Aorta (tissue), 5 donors: ENCODE measurements at regions of chr1 and their contacts with region 1.

Region 1: DNA sequence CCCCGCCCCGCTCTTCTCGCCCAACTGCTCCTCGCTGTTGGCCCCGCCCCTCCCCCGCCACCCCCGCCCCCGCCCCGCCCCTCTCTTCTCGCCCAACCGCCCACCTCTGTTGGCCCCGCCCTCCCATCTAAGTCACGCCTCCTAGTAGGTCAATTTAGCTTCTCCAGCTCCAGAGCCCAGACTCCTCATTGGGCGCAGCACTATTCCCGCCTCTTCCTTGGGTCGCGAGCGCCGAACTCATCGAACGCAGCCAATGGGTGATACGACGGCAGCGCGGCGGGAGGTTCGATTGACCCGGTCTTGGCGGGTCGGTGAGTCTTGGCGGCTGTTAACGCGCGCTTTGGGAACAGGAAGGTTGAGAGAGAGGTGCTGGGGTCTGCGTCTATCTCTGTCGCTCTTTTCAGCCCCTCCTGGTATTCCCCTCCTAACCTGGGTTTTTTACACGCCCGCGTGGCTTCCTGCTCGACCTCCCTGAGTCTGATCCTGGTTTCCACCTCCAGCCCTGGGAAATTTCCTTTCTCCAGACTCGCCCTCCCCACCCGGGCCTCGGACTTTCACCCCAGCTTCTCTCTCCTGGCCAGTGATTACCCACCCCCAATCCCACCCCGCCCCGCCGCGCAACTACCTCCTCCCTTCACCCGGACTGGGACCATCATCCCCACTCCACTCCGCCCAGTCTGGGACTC is at the start of gene RAD54L:
- DNase-seq: peak; percentile 98 to 99
- ATAC-seq: peak; percentile 98
- H3K4me3 ChIP-seq: peak within 1 kb of the TSS; percentile 52 to 97
- H3K27ac ChIP-seq: peak within 1 kb of the TSS in 1 of 2 donors; percentile 30
- H3K4me1 ChIP-seq: no peaks in the 10 kb centered on the region
- H3K27me3 ChIP-seq: no peaks in the 10 kb centered on the region
- total RNA-seq, gene RAD54L: 1.6 to 2.3 TPM

Region 2: DNA sequence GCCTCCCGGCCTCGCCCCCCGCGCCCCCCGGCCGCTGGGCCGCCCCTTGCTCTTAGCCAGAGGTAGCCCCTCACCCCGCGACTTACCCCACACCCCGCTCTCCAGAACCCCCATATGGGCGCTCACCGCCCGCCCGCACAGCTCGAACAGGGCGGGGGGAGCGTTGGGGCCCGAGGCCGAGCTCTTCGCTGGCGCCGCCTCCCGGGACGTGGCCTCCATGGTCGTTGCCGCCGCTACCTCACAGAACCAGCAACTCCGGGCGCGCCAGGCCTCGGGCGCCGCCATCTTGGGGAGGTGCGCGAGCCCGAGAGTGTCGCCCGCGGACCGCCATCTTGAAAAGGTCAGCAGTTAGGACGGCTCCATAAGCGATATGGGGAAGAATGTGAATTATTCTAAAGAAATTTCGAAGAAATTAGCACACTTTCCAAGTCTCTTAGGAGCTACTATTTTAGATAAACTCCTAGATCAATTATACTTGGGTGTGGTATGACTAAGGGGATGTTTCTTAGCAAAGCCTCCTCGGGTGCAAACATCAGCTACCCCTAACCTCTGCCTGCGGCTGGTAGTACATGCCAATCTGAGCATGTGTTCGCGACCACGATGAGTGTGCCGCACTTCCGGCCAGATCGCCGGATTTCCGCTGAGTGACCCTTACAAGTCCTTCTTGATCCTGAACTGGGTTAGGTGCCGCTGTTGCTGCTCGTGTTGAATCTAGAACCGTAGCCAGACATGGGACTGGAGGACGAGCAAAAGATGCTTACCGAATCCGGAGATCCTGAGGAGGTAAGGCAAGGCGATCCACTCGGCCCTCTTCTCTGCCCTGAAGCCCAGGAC is 55.7 kb after region 1 on chr1 and contains the starts of genes LRRC41 and UQCRH:
- intact Hi-C with region 1: loop called in 1 of 2 experiments (anchors 5 kb)
- DNase-seq: peak; percentile 96 to 98
- ATAC-seq: peak; percentile 96
- H3K4me3 ChIP-seq: peak within 1 kb of the TSS; percentile 83 to 86
- H3K27ac ChIP-seq: peak within 1 kb of the TSS; percentile 87 to 93
- H3K4me1 ChIP-seq: no peaks in the 10 kb centered on the region
- H3K27me3 ChIP-seq: no peaks in the 10 kb centered on the region
- total RNA-seq, gene LRRC41: 48.5 to 49.1 TPM
- total RNA-seq, gene UQCRH: 100 to 134 TPM